Activated T-helper 1 cell treated with anti-CD3 and anti-CD28 coated beads, Interleukin-12 subunit alpha, Interleukin-12 subunit beta, Interleukin-2, Interleukin-4 antibody, amounts not matched to agents 30 ng/mL and 10 ng/mL and 1 ng/mL, durations not matched to agents 14 hours and 24 hours and 36 hours (primary cell): ENCODE measurements at regions of chr11 and their contacts with region 1.

Region 1: DNA sequence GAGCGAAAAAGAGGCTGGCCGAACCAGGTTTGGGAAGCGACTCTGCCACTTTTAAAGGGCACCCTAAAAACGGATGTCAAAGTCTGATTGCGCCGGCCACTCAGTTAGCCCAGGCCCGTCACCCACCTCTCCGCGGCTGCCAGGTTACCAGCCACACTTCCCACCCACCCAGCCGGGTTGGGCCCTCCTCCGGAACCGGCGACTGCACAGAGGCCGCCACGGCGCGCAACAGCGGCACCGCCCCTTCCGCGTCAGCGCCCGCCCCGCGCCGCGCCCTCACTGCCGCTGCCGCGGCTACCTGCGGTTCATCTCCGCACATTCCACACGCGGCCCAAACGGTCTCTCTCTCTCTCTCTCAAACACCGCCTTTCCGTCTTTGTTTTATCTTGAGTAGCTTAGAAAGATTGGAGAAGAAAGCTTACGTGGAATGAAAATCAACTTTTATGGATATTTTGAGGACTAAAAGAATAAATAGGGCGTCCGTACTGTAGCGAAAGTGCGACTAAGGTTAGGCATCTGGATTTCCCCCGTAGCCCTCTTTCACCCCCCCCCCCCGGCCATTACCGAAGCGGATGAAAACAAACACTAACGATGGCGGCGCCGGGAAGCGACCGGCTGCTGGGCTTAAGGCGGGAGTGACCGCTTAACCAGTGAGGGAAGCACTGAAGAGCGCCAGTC is at the starts of genes ATG13 and HARBI1:
- DNase-seq: peak; percentile 91
- H3K4me3 Mint-ChIP-seq: peak within 1 kb of the TSS; percentile 89
- H3K27ac Mint-ChIP-seq: peak within 1 kb of the TSS; percentile 100
- H3K4me1 Mint-ChIP-seq: peaks cover 46% of the 10 kb centered on the region
- H3K27me3 Mint-ChIP-seq: no peaks in the 10 kb centered on the region
- total RNA-seq, gene ATG13: 66.4 and 73.8 TPM in 2 replicates
- total RNA-seq, gene HARBI1: 4.5 and 5.3 TPM in 2 replicates

Region 2: GRCh38 chr11:46121724-46122477 is 495.2 kb before region 1 on chr11:
- intact Hi-C with region 1: loop called (anchors 5 kb)
- DNase-seq: peak; percentile 76
- H3K4me3 Mint-ChIP-seq: peak overlapping the region; percentile 86
- H3K27ac Mint-ChIP-seq: peak overlapping the region; percentile 91
- H3K4me1 Mint-ChIP-seq: peaks cover 40% of the 10 kb centered on the region
- H3K27me3 Mint-ChIP-seq: no peaks in the 10 kb centered on the region

Region 3: GRCh38 chr11:46247664-46248063 is 369.5 kb before region 1 on chr11:
- intact Hi-C with region 1: no loop called
- DNase-seq: no peak
- H3K4me3 Mint-ChIP-seq: no peak overlapping the region
- H3K27ac Mint-ChIP-seq: no peak overlapping the region
- H3K4me1 Mint-ChIP-seq: peaks cover 24% of the 10 kb centered on the region
- H3K27me3 Mint-ChIP-seq: no peaks in the 10 kb centered on the region

Region 4: GRCh38 chr11:46389450-46390253 is 227.5 kb before region 1 on chr11:
- intact Hi-C with region 1: loop called (anchors 2 kb)
- DNase-seq: peak; percentile 45
- H3K4me3 Mint-ChIP-seq: peak overlapping the region; percentile 60
- H3K27ac Mint-ChIP-seq: no peak overlapping the region
- H3K4me1 Mint-ChIP-seq: peaks cover 23% of the 10 kb centered on the region
- H3K27me3 Mint-ChIP-seq: peaks cover 52% of the 10 kb centered on the region

Region 5: DNA sequence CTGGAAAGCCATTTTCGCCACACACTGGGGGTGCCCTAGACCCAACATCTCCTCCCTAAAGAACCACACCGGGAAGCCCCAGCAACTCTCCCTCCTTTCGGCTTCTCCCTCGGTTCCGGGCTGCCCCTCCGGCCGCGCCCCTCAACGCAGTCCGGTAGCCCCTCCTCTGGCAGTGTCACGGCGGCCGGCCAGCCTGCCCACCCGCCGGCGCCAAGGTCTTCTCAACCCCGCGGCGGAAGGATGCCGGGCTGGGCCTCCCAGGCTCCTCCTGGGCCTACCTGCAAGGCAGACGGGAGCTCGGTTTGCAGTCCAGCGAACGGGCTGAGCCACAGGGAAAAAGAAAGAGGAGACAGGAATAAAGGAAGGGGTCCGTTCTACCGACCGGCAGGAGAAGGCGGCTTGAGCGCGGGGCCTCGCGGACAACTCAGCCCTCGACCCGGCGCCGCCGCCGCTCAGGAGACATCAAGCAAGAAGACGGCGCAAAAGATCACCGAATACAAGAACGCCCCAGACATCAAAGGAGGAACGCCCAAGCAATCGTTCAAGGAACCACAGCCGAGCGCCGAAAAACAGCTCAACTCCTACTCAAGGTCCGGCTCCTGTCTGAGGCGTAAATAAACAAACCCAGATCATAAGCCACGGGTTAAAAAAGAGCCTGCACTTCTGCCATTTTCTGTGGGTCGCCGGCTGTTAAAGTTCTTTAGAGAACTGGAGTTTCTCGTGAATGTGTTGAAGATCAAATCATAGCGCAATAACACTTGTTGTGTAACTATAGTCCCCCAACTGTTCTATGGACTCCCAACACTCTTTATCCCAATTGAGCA is 23.4 kb before region 1 on chr11 and contains the start of gene AMBRA1:
- intact Hi-C with region 1: loop called (anchors 1 kb)
- DNase-seq: peak; percentile 81
- H3K4me3 Mint-ChIP-seq: peak within 1 kb of the TSS; percentile 93
- H3K27ac Mint-ChIP-seq: peak within 1 kb of the TSS; percentile 87
- H3K4me1 Mint-ChIP-seq: peaks cover 44% of the 10 kb centered on the region
- H3K27me3 Mint-ChIP-seq: no peaks in the 10 kb centered on the region
- total RNA-seq, gene AMBRA1: 35.7 and 37.9 TPM in 2 replicates

Region 6: GRCh38 chr11:46826310-46827044 is 209.3 kb after region 1 on chr11:
- intact Hi-C with region 1: loop called (anchors 5 kb)
- DNase-seq: peak; percentile 62
- H3K4me3 Mint-ChIP-seq: peak overlapping the region; percentile 69
- H3K27ac Mint-ChIP-seq: no peak overlapping the region
- H3K4me1 Mint-ChIP-seq: peaks cover 33% of the 10 kb centered on the region
- H3K27me3 Mint-ChIP-seq: no peaks in the 10 kb centered on the region

Region 7: DNA sequence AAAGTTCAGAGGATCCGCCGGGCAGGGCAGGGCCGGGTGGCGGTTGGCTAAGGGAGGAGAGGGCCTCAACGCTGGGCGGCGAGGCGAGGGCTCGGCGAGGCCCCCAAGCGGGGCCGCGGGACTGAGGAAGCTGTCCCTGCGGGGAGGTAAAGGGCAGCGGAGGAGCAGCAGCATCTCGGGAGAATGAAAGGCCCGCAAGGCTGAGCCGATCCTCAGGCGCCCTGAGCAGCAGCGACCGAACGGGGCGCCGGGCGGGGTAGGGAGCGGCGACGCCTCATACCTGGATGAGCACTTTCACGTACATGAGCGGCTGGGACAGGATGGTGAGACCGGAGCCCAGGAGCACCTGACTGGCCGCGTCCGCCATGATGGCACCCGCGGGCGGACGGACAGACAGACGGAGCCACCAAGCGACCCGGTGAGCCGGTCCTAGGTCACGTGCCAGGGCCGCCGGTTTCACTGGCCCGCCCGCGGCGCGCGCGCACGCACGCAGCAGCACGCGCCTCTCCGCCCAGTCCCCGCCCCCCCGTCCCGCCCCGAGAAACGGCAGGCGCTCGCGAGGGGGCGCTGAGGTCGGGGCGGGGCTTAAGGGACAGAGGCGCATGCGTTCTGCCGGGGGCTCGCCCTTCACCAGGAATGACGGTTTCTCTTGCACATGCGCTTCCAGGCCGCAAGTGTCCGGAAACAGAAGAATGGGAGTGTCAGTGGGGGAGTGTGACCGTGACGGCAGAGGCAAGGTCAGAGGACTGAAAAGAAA is 1025.1 kb after region 1 on chr11 and contains the start of gene MTCH2:
- intact Hi-C with region 1: loop called (anchors 5 kb)
- DNase-seq: peak; percentile 95
- H3K4me3 Mint-ChIP-seq: peak within 1 kb of the TSS; percentile 96
- H3K27ac Mint-ChIP-seq: peak within 1 kb of the TSS; percentile 97
- H3K4me1 Mint-ChIP-seq: peaks cover 30% of the 10 kb centered on the region
- H3K27me3 Mint-ChIP-seq: no peaks in the 10 kb centered on the region
- total RNA-seq, gene MTCH2: 116 and 118 TPM in 2 replicates